ENCODE measurements at regions of chr4 and their contacts with region 1.

Region 1: GRCh38 chr4:41069257-41069656 is 145.1 kb downstream of the APBB2 start:
- DNase-seq: no peak
- H3K4me3 ChIP-seq: no peak overlapping the region
- H3K27ac ChIP-seq: no peak overlapping the region
- H3K4me1 ChIP-seq: no peaks in the 10 kb centered on the region
- H3K27me3 ChIP-seq: no peaks in the 10 kb centered on the region
- CTCF ChIP-seq: no peak
- POLR2A ChIP-seq: no peak

Region 2: DNA sequence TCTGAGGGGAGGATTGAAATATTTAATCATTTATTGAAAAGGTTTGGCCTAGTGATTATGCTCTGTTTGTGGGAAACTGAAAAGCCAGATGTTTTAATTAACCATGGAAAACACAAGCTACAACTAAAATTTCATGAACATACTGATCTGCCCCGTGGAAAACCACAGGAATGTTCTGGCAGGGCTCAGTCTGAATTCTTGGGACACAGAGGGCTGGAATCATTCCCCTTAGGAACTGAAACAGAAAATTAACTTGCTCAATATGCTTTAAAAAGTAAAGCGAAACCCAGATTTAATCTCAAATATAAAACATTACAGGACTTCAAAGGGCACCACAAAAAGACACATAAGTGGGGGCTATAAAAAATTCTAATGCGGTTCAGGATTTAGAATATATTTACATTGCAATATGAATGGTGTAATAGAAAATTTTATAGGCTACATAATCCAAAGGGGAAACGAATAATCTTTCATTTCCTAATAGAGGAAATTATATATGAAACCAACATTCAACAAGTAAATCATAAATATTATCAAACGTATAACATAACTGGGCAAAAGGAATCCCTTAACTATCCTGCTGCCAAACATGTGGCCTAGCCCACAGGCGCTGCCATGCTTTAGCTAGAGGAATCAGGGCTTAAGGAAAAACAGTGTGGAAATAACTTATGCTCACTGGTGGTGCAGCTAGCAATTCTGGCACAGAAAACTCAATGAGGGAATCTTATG is 74.2 kb after region 1 on chr4:
- intact Hi-C with region 1: loop called (anchors 5 kb)
- DNase-seq: peak; percentile 58
- H3K4me3 ChIP-seq: no peak overlapping the region
- H3K27ac ChIP-seq: peak overlapping the region; percentile 61 to 72
- H3K4me1 ChIP-seq: peaks cover 4% of the 10 kb centered on the region
- H3K27me3 ChIP-seq: no peaks in the 10 kb centered on the region
- CTCF ChIP-seq: no peak
- POLR2A ChIP-seq: no peak

Measured in prostate gland (tissue), 2 donors.